CD14-positive monocyte (primary cell): ENCODE measurements at regions of chr2 and their contacts with region 1.

Region 1: GRCh38 chr2:169824373-169825333 is at the start of gene METTL5:
- DNase-seq: peak; percentile 51 to 77 (median 73)
- H3K4me3 ChIP-seq: peak within 1 kb of the TSS; percentile 83 to 95 (median 92)
- H3K4me3 Mint-ChIP-seq: peak within 1 kb of the TSS; percentile 84 to 92
- H3K27ac ChIP-seq: peak within 1 kb of the TSS in 1 of 2 donors; percentile 81
- H3K27ac Mint-ChIP-seq: peak within 1 kb of the TSS in 6 of 7 donors; percentile 54 to 76 (median 68)
- H3K4me1 ChIP-seq: peaks cover 27 to 44% of the 10 kb centered on the region in 2 donors
- H3K4me1 Mint-ChIP-seq: peaks cover 40% of the 10 kb centered on the region
- H3K27me3 ChIP-seq: no peaks in the 10 kb centered on the region
- H3K27me3 Mint-ChIP-seq: peaks cover 1 to 2% (median 2%) of the 10 kb centered on the region in 3 donors
- CTCF ChIP-seq: peak; percentile 95
- polyA plus RNA-seq, gene METTL5: 11.1 to 60.8 (median 51.0) TPM

Region 2: DNA sequence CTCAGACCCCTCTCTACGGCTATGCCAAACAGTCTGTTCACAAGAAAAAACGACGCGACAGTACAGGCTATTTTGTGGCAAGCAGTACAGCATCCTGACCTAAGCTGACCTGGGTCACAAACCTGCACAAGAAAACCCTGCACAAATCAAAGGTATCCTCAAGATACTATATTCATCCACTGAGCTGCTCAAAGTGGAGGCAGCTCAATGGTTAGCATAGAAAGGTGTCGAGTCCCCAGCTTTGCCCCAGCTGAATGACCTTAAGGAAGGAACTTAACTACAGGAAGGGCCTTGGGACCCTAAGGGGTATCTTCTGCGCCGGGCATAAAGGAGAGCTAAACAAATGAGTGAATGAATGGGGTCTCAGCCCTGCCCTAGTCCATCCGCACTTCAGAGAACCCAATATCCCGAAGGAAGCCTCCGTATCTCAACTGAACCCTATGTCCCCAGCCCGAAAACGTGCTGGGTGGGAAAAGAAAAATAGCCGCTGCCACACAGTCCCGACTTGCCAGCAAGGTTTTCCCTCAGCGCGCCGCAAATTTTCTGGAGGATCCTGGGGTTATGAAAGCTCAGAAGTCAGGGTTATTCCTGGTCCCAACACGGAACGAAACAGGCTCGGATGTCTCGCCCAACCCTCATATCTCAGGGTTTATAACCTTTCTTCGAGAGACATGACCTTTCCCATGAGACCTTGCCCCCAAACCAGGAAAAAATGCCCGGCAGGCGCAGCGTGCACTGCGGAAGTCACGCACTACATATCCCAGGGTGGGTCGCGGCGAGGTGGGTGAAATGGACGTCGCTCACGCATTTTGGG is 251.3 kb before region 1 on chr2 and contains the start of gene FASTKD1:
- intact Hi-C with region 1: loop called in 1 of 2 experiments (anchors 10 kb)
- DNase-seq: peak; percentile 83 to 89 (median 87)
- H3K4me3 ChIP-seq: peak within 1 kb of the TSS; percentile 52 to 85 (median 70)
- H3K4me3 Mint-ChIP-seq: peak within 1 kb of the TSS; percentile 94 to 98
- H3K27ac ChIP-seq: peak within 1 kb of the TSS; percentile 51 to 76
- H3K27ac Mint-ChIP-seq: peak within 1 kb of the TSS; percentile 91 to 97 (median 94)
- H3K4me1 ChIP-seq: peaks cover 5 to 10% of the 10 kb centered on the region in 2 donors
- H3K4me1 Mint-ChIP-seq: peaks cover 10% of the 10 kb centered on the region
- H3K27me3 ChIP-seq: peaks cover 0 to 3% of the 10 kb centered on the region in 2 donors
- H3K27me3 Mint-ChIP-seq: peaks cover 0 to 4% (median 4%) of the 10 kb centered on the region in 3 donors
- CTCF ChIP-seq: no peak
- polyA plus RNA-seq, gene FASTKD1: 9.1 to 16.9 (median 14.3) TPM

Region 3: GRCh38 chr2:169584005-169584877 is 240.4 kb before region 1 on chr2 and contains the start of gene PPIG:
- intact Hi-C with region 1: loop called (anchors 10 kb)
- DNase-seq: peak; percentile 89 to 93 (median 91)
- H3K4me3 ChIP-seq: peak within 1 kb of the TSS; percentile 59 to 100 (median 92)
- H3K4me3 Mint-ChIP-seq: peak within 1 kb of the TSS; percentile 98 to 99
- H3K27ac ChIP-seq: peak within 1 kb of the TSS; percentile 96
- H3K27ac Mint-ChIP-seq: peak within 1 kb of the TSS; percentile 99 to 100 (median 100)
- H3K4me1 ChIP-seq: peaks cover 19 to 23% of the 10 kb centered on the region in 2 donors
- H3K4me1 Mint-ChIP-seq: peaks cover 28% of the 10 kb centered on the region
- H3K27me3 ChIP-seq: no peaks in the 10 kb centered on the region
- H3K27me3 Mint-ChIP-seq: peaks cover 0 to 2% (median 0%) of the 10 kb centered on the region in 3 donors
- CTCF ChIP-seq: no peak
- polyA plus RNA-seq, gene PPIG: 21.0 to 34.4 (median 21.3) TPM

Region 4: DNA sequence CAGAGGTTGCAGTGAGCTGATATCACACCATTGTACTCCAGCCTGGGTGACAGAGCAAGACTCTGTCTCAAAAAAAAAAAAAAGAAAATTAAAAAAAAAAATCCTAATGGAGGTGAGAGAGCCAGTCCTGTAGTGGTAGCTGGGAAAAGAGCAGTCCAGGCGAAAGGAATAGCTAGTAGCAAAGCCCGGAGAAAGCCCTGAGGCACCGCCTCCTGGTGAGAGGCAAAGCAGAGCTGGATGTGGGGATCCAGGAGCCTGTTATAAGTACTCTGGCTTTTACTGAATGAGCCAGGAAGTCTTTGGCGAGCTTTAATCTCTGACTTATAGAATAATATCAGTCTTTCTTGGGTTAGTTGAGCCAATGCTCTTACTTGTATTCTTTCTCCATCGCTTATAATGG is 97.6 kb before region 1 on chr2:
- intact Hi-C with region 1: no loop called
- DNase-seq: no peak
- H3K4me3 ChIP-seq: no peak overlapping the region
- H3K4me3 Mint-ChIP-seq: no peak overlapping the region
- H3K27ac ChIP-seq: no peak overlapping the region
- H3K27ac Mint-ChIP-seq: no peak overlapping the region
- H3K4me1 ChIP-seq: no peaks in the 10 kb centered on the region
- H3K4me1 Mint-ChIP-seq: no peaks in the 10 kb centered on the region
- H3K27me3 ChIP-seq: peaks cover 0 to 2% of the 10 kb centered on the region in 2 donors
- H3K27me3 Mint-ChIP-seq: peaks cover 3 to 5% (median 3%) of the 10 kb centered on the region in 3 donors
- CTCF ChIP-seq: no peak

Region 5: DNA sequence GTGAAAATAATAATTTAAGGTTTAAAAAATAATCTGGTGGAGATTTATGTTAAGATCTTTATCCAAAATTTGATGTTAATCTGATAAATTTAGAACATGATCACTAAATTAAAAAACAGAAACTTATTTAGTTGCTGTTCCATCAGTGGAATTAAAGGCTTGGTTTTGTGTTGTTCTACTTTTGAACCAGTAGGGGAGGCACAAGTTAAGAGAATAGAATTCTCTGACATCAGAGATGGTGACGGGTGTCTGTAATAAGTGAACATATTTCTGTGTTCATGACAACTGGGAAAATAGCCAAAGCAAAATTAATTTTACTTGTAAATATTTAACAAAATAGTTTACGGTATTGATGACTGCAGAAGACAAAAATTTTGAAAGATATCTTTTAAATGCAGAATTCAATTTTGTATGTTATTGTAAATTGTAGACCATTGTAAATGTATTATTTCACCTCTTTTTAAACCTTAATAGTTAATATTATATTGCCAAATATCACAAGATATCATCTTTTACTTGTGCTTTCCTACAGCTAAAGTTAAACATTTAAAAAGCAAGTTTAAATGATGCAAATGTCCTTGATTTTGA is 108.6 kb after region 1 on chr2:
- intact Hi-C with region 1: loop called in 1 of 2 experiments (anchors 10 kb)
- DNase-seq: peak in 2 of 3 donors; percentile 10 to 12
- H3K4me3 ChIP-seq: no peak overlapping the region
- H3K4me3 Mint-ChIP-seq: no peak overlapping the region
- H3K27ac ChIP-seq: no peak overlapping the region
- H3K27ac Mint-ChIP-seq: no peak overlapping the region
- H3K4me1 ChIP-seq: no peaks in the 10 kb centered on the region
- H3K4me1 Mint-ChIP-seq: no peaks in the 10 kb centered on the region
- H3K27me3 ChIP-seq: no peaks in the 10 kb centered on the region
- H3K27me3 Mint-ChIP-seq: no peaks in the 10 kb centered on the region
- CTCF ChIP-seq: peak; percentile 77